Motor neuron (in vitro differentiated cells): ENCODE measurements at regions of chr5 and their contacts with region 1.

Region 1: GRCh38 chr5:39714036-39714698 is 289.4 kb upstream of the DAB2 start:
- ATAC-seq: peak in 3 of 8 experiments; percentile 39 to 47 (median 45)
- H3K4me3 ChIP-seq: no peak overlapping the region
- H3K27ac ChIP-seq: no peak overlapping the region
- H3K4me1 ChIP-seq: no peaks in the 10 kb centered on the region

Region 2: GRCh38 chr5:39948867-39949468 is 234.8 kb after region 1 on chr5:
- in situ Hi-C with region 1: loop called in 3 of 9 experiments (anchors 10 to 25 kb)
- ATAC-seq: peak; percentile 27 to 99 (median 68)
- H3K4me3 ChIP-seq: no peak overlapping the region
- H3K27ac ChIP-seq: no peak overlapping the region
- H3K4me1 ChIP-seq: no peaks in the 10 kb centered on the region

Region 3: DNA sequence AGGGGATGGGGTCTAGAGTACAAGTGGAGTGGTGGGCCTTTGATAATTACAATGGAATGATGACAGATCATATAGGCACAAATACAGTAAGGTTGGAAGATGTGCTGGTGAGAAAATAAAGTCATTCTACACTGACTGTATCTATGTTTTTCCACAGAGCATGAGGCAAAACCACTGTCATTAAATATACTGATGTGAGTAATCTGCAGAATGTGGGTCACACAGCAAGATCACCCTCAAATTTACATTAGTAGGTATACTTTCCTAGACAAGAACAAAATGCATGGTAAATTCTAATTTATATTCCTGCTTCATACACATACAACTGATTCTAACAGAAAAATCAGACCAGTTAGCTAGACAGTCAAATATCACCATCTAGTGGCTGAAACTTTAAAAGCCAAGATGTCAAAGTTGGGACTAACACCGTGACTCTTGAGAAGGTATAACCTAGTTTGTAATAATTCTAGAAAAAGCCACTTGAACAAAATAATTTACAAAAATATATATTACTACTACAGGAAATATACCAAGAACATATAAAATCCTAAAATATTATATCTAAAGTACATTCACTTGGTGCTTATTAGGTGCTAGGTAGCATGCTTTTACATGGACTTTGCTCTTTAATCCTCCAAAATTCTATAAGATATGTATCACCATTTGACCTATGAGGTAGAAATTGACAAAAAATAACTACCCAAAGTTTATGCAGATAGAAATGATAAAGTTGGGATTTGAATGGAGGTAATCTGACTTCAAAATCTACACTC is 1022.1 kb after region 1 on chr5:
- in situ Hi-C with region 1: loop called in 1 of 9 experiments (anchors 25 kb)
- ATAC-seq: peak in 4 of 8 experiments; percentile 61 to 77 (median 66)
- H3K4me3 ChIP-seq: no peak overlapping the region
- H3K27ac ChIP-seq: no peak overlapping the region
- H3K4me1 ChIP-seq: no peaks in the 10 kb centered on the region